Activated CD4-positive, alpha-beta T cell treated with anti-CD3 and anti-CD28 coated beads, Interleukin-2, amount 10 ng/mL, durations not matched to agents 7 days and 5 days (primary cell): ENCODE measurements at regions of chr1 and their contacts with region 1.

Region 1: GRCh38 chr1:205658943-205659581 is 21.2 kb downstream of the SLC45A3 start:
- DNase-seq: peak; percentile 81
- H3K4me3 Mint-ChIP-seq: no peak overlapping the region
- H3K27ac Mint-ChIP-seq: no peak overlapping the region
- H3K4me1 Mint-ChIP-seq: no peaks in the 10 kb centered on the region
- H3K27me3 Mint-ChIP-seq: peaks cover 8% of the 10 kb centered on the region

Region 2: GRCh38 chr1:205458777-205459566 is 200.1 kb before region 1 on chr1:
- CTCF ChIA-PET with region 1: no interaction called
- POLR2A ChIA-PET with region 1: no interaction called
- DNase-seq: peak; percentile 49
- H3K4me3 Mint-ChIP-seq: no peak overlapping the region
- H3K27ac Mint-ChIP-seq: no peak overlapping the region
- H3K4me1 Mint-ChIP-seq: peaks cover 10% of the 10 kb centered on the region
- H3K27me3 Mint-ChIP-seq: peaks cover 58% of the 10 kb centered on the region

Region 3: DNA sequence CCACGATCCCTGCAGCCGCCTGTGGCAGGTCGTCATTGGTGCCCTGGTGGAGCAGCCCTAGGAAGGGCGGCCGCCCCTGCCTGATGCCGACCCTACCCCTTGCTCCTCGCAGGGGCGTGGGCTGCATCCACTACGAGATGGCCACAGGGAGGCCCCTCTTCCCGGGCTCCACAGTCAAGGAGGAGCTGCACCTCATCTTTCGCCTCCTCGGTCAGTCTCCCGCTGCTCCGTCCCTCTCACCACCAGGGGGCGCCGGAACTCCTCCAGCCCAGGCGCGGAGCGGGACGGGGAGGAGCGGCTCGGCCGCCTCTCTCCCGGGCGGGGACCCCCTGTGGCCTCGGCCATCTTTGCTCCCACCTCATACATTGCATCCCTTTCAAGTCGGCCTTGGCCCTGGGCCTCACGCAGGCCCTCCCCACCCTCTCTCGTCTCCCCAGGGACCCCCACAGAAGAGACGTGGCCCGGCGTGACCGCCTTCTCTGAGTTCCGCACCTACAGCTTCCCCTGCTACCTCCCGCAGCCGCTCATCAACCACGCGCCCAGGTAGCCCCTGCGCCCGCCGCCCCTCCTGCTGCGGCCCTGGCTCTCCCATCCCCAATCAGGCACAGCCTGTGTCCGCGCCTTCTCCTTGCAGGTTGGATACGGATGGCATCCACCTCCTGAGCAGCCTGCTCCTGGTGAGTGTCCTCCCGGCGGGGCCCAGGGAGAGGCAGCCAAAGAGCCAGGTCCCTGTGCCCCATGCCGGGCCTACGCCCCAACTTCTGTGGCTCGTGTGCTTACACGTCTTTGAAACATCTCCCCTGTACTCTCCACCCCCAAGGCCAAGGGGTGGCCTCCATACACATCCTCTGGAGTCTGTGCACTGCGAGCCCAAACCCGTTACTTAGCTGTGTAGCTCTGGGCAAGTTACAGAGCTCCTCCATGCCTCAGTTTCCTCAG is 129.9 kb before region 1 on chr1:
- CTCF ChIA-PET with region 1: interaction called, 26 read pairs
- POLR2A ChIA-PET with region 1: no interaction called
- DNase-seq: peak; percentile 82
- H3K4me3 Mint-ChIP-seq: no peak overlapping the region
- H3K27ac Mint-ChIP-seq: no peak overlapping the region
- H3K4me1 Mint-ChIP-seq: no peaks in the 10 kb centered on the region
- H3K27me3 Mint-ChIP-seq: no peaks in the 10 kb centered on the region

Region 4: DNA sequence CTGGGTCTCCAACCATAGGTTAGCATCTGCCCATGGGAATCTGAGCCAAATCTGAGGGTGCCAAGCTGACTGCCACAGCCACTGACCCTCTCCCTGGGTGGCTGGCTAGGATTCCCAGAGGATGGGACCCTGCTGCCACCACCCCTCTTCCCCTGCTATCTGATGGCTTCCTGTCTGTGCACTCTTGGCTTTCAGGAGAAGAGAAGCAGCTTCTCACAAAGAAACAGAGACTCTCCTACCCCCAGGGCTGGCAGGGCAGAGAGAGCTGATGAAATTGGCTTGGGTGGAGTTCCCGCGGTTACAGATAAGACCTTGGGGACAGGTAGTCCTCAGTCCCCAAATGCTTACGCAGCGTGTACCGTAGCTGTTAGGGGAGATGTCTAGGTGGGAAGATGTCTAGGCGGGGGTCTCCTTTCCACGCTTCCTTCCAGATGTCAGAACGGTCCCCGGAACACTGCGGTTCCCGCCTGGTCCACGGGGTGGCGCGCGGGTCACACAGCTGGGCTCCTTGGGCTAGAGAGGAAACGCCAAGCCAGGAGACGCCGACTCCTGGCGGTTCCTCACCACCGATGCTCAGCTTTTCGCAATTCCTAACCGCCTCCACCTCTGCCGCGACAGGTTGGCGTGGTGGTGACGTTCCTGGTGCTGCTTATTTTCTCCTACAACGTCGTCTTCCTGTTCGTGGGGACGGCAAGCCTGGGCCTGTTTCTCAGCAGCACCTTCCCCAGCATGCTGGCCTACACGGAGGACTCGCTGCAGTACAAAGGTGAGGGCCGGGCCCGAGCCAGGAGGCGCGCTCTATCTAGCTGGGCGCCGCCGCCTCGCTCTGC is 67.3 kb before region 1 on chr1:
- CTCF ChIA-PET with region 1: interaction called, 185 read pairs
- POLR2A ChIA-PET with region 1: interaction called, 4 read pairs
- DNase-seq: peak; percentile 89
- H3K4me3 Mint-ChIP-seq: peak overlapping the region; percentile 81
- H3K27ac Mint-ChIP-seq: peak overlapping the region; percentile 89
- H3K4me1 Mint-ChIP-seq: peaks cover 47% of the 10 kb centered on the region
- H3K27me3 Mint-ChIP-seq: no peaks in the 10 kb centered on the region

Region 5: DNA sequence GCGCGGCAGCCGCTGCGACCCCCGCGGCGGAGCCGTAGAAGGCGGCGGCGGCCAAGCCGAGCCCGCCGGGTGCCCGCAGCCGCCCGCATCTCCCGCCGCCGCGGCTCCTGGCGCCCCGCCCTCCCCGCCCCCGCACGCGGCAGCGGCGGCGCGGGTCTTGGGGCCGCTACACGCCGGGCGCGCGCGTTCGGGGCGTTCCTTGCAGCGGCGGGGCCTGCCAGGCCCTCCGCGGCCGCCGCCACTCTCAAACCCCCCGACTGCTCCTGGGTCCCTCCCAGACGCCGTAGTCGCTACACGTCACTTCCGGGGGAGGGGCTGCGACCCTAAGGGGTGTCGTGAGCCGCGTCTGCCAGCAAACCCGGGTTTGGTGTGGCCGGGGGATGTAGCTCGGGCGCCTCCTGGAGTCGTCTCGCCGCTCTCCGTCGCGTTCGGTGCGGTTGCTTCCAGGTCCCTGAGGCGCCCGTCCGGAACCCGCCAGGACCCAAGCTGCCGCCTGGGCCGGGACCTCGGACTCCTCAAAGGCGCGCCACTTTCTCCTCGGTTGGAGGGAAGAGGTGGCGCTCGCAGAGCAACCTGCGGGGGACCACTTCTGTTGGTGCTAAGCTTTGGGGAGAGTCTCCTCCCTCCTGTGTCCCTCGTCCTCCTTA is 27.2 kb before region 1 on chr1 and contains the start of gene ELK4:
- CTCF ChIA-PET with region 1: interaction called, 38 read pairs
- POLR2A ChIA-PET with region 1: no interaction called
- DNase-seq: peak; percentile 99
- H3K4me3 Mint-ChIP-seq: peak within 1 kb of the TSS; percentile 81
- H3K27ac Mint-ChIP-seq: peak within 1 kb of the TSS; percentile 95
- H3K4me1 Mint-ChIP-seq: peaks cover 39% of the 10 kb centered on the region
- H3K27me3 Mint-ChIP-seq: peaks cover 5% of the 10 kb centered on the region
- total RNA-seq, gene ELK4: 99.4 to 103 TPM

Region 6: DNA sequence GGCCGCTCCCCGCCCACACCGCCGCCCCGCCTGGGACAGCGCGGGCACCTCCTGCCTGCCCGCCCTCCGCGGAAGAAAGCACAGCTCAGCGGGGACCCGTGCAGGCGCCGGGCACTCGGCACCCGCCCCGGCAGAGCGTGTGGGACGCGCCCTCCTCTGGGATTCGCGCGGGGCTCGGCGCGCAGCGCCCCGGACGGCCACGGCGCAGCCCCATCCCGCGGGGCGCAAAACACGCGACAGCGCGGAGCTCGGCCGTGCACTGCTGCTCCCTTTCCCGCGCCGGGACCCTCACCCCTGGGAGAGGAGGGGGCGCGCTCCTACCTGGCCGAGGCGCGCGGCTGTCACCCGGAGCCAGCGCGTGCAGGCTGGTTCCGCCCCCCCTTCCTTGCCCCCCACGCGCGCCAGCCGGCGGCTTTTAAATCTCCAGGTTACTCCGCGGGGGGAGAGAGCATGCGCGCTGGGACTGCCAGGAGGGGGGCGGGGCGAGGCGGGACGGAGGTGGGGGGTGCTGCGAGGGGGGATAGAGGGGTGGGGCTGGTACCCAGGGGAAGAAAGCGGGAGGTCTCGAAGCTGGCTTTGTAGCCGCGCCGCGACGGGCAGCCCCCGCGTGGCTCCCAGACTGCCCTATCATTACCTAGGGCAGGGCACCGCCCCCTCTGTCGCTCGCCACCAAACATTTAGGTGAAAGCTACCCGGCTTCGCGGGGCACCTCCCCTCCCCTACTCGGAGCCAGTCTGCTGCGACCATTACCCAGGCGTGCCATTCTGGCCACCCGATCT is 21.2 kb after region 1 on chr1 and contains the start of gene SLC45A3:
- CTCF ChIA-PET with region 1: interaction called, 13 read pairs
- POLR2A ChIA-PET with region 1: no interaction called
- DNase-seq: peak; percentile 35
- H3K4me3 Mint-ChIP-seq: peak within 1 kb of the TSS; percentile 73
- H3K27ac Mint-ChIP-seq: no peak within 1 kb of the TSS
- H3K4me1 Mint-ChIP-seq: peaks cover 12% of the 10 kb centered on the region
- H3K27me3 Mint-ChIP-seq: peaks cover 32% of the 10 kb centered on the region
- total RNA-seq, gene SLC45A3: 0.08 TPM in 1 of 2 experiments, not detected in the other

Region 7: DNA sequence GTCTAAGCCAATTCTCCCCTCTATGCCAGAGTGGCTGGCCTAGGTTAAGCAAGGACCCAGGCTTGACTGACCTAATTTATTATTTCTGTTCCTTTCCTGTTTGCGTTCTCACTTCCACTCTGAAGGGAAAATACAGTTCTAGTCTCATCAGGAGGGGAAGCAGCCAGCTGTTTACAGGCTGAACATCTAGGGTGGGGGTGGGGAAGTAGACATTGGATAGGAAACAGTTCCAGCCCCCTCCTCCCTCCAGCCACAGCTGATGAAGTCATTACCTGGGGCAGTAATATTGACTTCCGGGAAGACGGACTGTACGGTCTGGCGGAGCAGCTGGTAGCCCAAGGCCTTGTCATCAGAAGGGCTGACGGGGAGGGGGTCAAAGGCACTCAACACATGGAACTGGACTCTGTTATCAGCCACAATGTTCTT is 173.3 kb after region 1 on chr1:
- CTCF ChIA-PET with region 1: no interaction called
- POLR2A ChIA-PET with region 1: no interaction called
- DNase-seq: no peak
- H3K4me3 Mint-ChIP-seq: no peak overlapping the region
- H3K27ac Mint-ChIP-seq: no peak overlapping the region
- H3K4me1 Mint-ChIP-seq: no peaks in the 10 kb centered on the region
- H3K27me3 Mint-ChIP-seq: no peaks in the 10 kb centered on the region

Region 8: GRCh38 chr1:205977402-205978014 is 318.4 kb after region 1 on chr1:
- CTCF ChIA-PET with region 1: interaction called, 35 read pairs
- POLR2A ChIA-PET with region 1: no interaction called
- DNase-seq: peak; percentile 83
- H3K4me3 Mint-ChIP-seq: no peak overlapping the region
- H3K27ac Mint-ChIP-seq: no peak overlapping the region
- H3K4me1 Mint-ChIP-seq: no peaks in the 10 kb centered on the region
- H3K27me3 Mint-ChIP-seq: no peaks in the 10 kb centered on the region